Ascending aorta (tissue), 2 donors: ENCODE measurements at regions of chr10 and their contacts with region 1.

Region 1: GRCh38 chr10:59079386-59080226 is 96.8 kb upstream of the PHYHIPL start:
- DNase-seq: no peak
- H3K4me3 ChIP-seq: no peak overlapping the region
- H3K27ac ChIP-seq: peak overlapping the region; percentile 82 to 86
- H3K4me1 ChIP-seq: peaks cover 8 to 48% of the 10 kb centered on the region in 2 donors
- H3K27me3 ChIP-seq: no peaks in the 10 kb centered on the region
- CTCF ChIP-seq: no peak

Region 2: GRCh38 chr10:58268870-58269605 is 810.6 kb before region 1 on chr10 and contains the start of gene CISD1:
- intact Hi-C with region 1: loop called (anchors 10 kb)
- DNase-seq: peak; percentile 95 to 98
- H3K4me3 ChIP-seq: peak within 1 kb of the TSS; percentile 84 to 87
- H3K27ac ChIP-seq: peak within 1 kb of the TSS; percentile 96
- H3K4me1 ChIP-seq: peaks cover 0 to 10% of the 10 kb centered on the region in 2 donors
- H3K27me3 ChIP-seq: no peaks in the 10 kb centered on the region
- CTCF ChIP-seq: no peak
- total RNA-seq, gene CISD1: 18.0 TPM

Region 3: DNA sequence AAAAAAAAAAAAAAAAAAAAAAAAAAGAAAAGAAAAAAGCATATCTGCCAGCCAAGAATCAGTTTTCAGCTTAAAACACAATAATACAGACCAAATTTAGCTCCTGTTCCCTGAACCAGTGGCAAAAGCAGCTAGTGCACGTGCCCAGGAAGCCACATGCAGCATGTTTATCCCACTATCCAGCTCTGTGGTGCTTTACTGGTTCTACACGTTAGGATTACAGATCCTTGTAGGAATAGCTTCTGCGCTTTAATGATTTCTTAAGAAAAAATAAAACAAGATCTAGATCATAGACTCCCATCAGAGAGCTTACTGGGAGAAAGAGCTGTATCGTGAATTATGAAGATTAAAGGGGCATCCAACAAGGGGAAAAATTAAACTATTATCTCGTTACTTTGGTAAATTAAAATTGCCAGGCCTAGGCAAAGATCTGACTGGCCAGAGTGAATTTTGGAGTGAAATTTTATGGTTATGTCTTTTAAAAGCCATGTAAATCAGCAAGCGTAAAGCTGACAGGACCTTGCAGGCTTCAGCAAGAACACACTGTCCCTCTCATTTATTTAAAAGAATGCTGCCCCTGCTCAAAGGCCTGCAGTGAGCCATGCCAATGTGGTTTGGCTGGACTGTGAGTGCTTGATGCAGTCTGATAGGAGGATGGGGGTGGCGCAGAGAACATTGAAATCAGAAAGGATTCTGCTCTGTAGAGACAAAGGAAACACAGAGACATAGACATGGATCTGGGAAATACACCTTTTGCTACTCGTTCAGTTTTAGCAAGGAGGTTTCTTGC is 80.5 kb before region 1 on chr10:
- intact Hi-C with region 1: loop called (anchors 2 kb)
- DNase-seq: peak; percentile 43 to 89
- H3K4me3 ChIP-seq: peak overlapping the region in 1 of 2 donors; percentile 32
- H3K27ac ChIP-seq: peak overlapping the region; percentile 84 to 86
- H3K4me1 ChIP-seq: peaks cover 4 to 35% of the 10 kb centered on the region in 2 donors
- H3K27me3 ChIP-seq: no peaks in the 10 kb centered on the region
- CTCF ChIP-seq: no peak

Region 4: DNA sequence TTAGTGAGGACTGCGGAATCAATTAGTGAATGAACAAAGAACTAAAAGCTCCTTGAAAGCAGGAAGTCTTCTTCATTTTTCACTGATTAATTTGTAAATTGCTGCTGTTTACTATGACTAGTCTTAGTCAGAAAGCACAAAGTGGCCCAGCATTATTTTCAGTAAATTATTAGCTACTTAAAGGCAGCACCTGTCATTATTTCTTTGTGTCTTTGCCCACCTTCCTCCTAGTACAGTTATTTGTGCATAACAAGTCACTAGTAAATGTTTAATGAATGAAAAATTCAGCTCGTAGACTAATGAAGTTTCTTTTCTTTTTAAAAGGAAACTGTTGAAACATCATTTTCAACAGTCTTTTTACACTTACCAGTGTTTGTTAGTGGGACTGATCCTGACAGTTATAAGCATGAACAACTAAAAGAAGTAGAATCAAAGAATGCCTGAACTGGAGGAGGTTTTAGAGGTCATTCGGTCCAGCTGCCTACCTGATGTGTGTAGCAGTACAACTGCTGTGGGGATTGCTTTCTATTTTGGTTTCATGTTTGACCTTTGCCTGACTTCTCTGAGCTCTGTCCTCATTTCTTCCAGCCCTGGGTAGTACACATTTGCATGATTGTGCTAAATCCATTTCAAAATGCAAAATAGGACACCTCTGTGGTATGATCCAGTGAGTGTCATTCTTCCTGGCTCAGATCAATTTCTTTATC is 43.1 kb before region 1 on chr10:
- intact Hi-C with region 1: no loop called
- DNase-seq: no peak
- H3K4me3 ChIP-seq: no peak overlapping the region
- H3K27ac ChIP-seq: no peak overlapping the region
- H3K4me1 ChIP-seq: no peaks in the 10 kb centered on the region
- H3K27me3 ChIP-seq: no peaks in the 10 kb centered on the region
- CTCF ChIP-seq: no peak

Region 5: DNA sequence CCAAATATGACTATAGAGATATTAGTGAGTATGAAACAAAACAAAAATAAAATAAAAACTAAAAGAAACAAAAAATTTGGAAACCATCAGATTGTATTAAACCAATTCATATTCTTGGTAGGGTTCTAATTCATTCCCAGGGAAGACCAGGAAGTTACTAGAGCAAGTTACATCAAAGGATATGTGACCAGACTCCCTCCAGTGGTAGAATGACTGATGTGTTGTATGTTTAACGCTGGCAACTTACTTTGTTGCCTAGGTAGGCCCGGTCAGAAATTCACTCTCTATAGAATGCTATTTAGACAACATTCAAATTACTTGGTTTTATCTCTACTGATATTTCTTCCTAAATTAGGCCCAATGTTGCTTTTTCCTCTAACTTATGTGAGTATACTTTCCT is 102.1 kb after region 1 on chr10:
- intact Hi-C with region 1: loop called (anchors 5 kb)
- DNase-seq: no peak
- H3K4me3 ChIP-seq: no peak overlapping the region
- H3K27ac ChIP-seq: no peak overlapping the region
- H3K4me1 ChIP-seq: peaks cover 4 to 8% of the 10 kb centered on the region in 2 donors
- H3K27me3 ChIP-seq: no peaks in the 10 kb centered on the region
- CTCF ChIP-seq: peak; percentile 10 to 45 (median 11)

Region 6: GRCh38 chr10:59387951-59388670 is 308.5 kb after region 1 on chr10:
- intact Hi-C with region 1: loop called (anchors 5 kb)
- DNase-seq: no peak
- H3K4me3 ChIP-seq: no peak overlapping the region
- H3K27ac ChIP-seq: peak overlapping the region; percentile 79 to 89
- H3K4me1 ChIP-seq: peaks cover 0 to 6% of the 10 kb centered on the region in 2 donors
- H3K27me3 ChIP-seq: no peaks in the 10 kb centered on the region
- CTCF ChIP-seq: no peak

Region 7: DNA sequence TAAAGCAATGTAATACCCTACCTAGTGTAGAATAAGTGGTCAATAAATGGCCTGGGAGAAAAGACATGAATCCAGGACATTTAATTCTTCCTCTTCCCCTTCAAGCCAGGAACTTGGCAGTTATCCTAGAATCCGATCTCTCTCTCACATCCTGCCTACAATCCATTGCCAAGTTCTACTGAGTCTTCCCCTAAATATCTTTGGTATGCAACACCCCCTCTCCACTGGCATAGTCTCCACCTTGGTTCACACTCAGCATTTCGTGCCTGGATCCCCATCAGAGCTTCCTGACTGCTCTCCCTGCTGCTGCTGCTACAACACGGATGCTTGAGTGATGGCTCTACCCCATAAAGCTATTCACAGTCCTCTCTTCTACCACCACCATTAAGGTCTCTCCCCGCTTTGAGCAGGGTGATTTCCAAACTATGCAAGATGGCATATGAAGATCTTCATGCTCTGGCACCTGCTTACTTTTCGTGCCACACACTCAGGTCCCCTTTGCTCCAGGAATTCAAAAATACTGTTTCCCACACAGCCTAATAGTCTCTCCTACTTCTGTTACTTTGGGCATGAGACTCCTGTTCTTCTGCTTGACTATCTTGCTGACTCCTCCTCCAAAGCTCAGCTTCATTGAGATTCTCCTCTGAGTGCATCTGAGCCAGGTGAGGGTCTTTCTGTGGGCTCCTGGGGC is 1305.2 kb after region 1 on chr10:
- intact Hi-C with region 1: no loop called
- DNase-seq: peak in 1 of 2 donors; percentile 72
- H3K4me3 ChIP-seq: no peak overlapping the region
- H3K27ac ChIP-seq: peak overlapping the region in 1 of 2 donors; percentile 53
- H3K4me1 ChIP-seq: peaks cover 0 to 9% of the 10 kb centered on the region in 2 donors
- H3K27me3 ChIP-seq: no peaks in the 10 kb centered on the region
- CTCF ChIP-seq: no peak